Endothelial cell of umbilical vein (primary cell): ENCODE measurements at regions of chrX and their contacts with region 1.

Region 1: GRCh38 chrX:34631821-34632220 is 25.3 kb downstream of the TMEM47 start:
- DNase-seq: peak; percentile 69
- H3K4me3 ChIP-seq: no peak overlapping the region
- H3K27ac ChIP-seq: peak overlapping the region; percentile 29
- H3K4me1 ChIP-seq: peaks cover 11% of the 10 kb centered on the region
- H3K27me3 ChIP-seq: no peaks in the 10 kb centered on the region
- CTCF ChIP-seq: no peak
- POLR2A ChIP-seq: no peak

Region 2: DNA sequence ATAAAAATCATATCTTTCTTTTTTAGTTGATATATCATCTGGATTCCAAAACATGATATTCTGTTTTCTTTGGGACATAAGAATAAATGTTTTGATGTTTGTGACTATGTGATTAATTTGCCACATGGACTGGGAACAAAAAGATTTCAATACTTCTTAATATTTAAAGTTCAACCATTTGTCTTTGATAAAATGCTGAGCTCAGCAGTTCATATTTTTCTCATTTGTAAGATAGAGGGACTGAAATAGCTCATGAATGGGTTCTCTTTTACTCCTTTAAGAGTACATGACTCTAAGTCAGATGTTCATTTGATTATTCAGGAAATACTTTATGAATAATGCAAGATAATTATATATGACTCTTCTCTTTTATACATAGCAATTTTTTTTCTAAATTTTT is 293.8 kb before region 1 on chrX:
- CTCF ChIA-PET with region 1: no interaction called
- POLR2A ChIA-PET with region 1: no interaction called
- dilution Hi-C with region 1: no loop called
- intact Hi-C with region 1: no loop called
- DNase-seq: no peak
- H3K4me3 ChIP-seq: no peak overlapping the region
- H3K27ac ChIP-seq: no peak overlapping the region
- H3K4me1 ChIP-seq: no peaks in the 10 kb centered on the region
- H3K27me3 ChIP-seq: no peaks in the 10 kb centered on the region
- CTCF ChIP-seq: no peak
- POLR2A ChIP-seq: no peak

Region 3: GRCh38 chrX:34350561-34351335 is 281.1 kb before region 1 on chrX:
- CTCF ChIA-PET with region 1: no interaction called
- POLR2A ChIA-PET with region 1: no interaction called
- dilution Hi-C with region 1: no loop called
- intact Hi-C with region 1: loop called (anchors 1 kb)
- DNase-seq: peak; percentile 76
- H3K4me3 ChIP-seq: no peak overlapping the region
- H3K27ac ChIP-seq: peak overlapping the region; percentile 55
- H3K4me1 ChIP-seq: peaks cover 4% of the 10 kb centered on the region
- H3K27me3 ChIP-seq: no peaks in the 10 kb centered on the region
- CTCF ChIP-seq: no peak
- POLR2A ChIP-seq: no peak

Region 4: DNA sequence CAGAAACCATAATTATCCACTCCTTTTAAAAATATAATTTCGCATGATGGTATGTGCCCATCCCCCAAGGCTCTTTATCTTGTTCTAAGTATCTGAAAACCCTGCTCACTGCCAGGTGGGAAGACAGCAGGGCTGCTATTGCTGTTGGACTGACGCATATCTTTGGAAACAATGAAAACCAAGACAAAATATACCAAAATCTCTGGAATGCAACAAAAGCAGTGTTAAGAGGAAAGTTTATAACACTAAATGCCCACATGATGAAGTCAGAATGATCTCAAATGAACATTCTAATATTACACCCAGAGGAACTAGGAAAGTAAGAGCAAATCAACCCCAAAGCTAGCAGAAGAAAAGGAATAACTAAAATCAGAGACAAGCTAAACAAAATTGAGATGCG is 472.8 kb after region 1 on chrX:
- CTCF ChIA-PET with region 1: no interaction called
- POLR2A ChIA-PET with region 1: no interaction called
- dilution Hi-C with region 1: no loop called
- intact Hi-C with region 1: no loop called
- DNase-seq: no peak
- H3K4me3 ChIP-seq: no peak overlapping the region
- H3K27ac ChIP-seq: no peak overlapping the region
- H3K4me1 ChIP-seq: no peaks in the 10 kb centered on the region
- H3K27me3 ChIP-seq: no peaks in the 10 kb centered on the region
- CTCF ChIP-seq: no peak
- POLR2A ChIP-seq: no peak